ENCODE measurements at regions of chr2 and their contacts with region 1.

Region 1: GRCh38 chr2:9799665-9800632 is 43.3 kb upstream of the TAF1B start:
- ATAC-seq: peak; percentile 60 to 95 (median 87)
- H3K4me3 ChIP-seq: no peak overlapping the region
- H3K27ac ChIP-seq: no peak overlapping the region
- H3K4me1 ChIP-seq: peaks cover 13 to 16% of the 10 kb centered on the region in 2 donors

Region 2: DNA sequence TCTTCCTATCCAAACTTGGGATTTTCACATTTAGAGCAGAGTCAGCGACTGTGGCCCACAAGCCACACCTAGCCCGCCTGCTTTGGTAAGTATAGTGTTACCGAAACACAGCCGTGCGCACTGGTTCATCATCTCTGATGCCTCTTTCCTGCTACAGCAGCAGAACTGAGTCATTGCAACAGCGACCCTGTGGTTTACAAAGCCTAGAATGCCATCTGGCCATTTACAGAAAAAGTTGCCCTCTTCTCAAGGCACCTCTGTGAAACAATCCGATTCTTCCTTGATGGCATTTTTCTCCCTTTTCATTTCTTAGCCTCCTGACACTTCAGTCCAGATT is 336.3 kb before region 1 on chr2:
- in situ Hi-C with region 1: no loop called
- ATAC-seq: no peak
- H3K4me3 ChIP-seq: no peak overlapping the region
- H3K27ac ChIP-seq: no peak overlapping the region
- H3K4me1 ChIP-seq: peaks cover 2 to 7% of the 10 kb centered on the region in 2 donors

Region 3: DNA sequence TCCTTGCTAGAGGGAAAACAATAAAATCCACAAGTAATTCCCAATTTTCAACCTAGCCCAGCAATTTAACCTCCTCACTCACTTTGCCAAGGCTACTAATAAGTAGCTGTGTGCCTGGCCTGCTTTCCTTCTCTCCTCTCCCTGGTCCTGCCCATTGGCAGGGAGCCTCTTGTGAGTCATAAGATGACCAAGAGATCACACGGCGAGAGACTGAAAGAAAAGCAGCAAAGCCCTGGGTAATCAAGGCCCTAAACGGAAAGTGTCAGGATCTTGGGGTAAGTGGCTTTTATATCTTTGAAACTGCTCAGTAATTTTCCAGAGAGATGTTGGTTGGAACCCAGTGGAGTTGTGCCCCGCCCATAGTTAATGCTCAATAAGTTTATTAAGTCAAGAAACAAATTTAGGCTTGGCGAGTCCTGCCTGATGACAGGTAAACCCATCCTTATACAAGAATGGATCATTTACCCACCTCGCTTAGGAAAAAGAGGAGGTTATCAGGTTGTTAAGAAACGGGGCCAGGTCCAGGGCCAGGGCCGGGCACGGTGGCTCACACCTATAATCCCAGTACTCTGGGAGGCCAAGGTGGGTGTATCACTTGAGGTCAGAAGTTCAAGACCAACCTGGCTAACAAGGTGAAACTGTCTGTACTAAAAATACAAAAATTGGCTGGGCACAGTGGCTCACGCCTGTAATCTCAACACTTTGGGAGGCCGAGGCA is 234.4 kb before region 1 on chr2:
- in situ Hi-C with region 1: no loop called
- ATAC-seq: peak; percentile 42 to 100 (median 82)
- H3K4me3 ChIP-seq: no peak overlapping the region
- H3K27ac ChIP-seq: no peak overlapping the region
- H3K4me1 ChIP-seq: peaks cover under 1 to 7% of the 10 kb centered on the region in 2 donors

Region 4: GRCh38 chr2:9961013-9961412 is 161.1 kb after region 1 on chr2:
- in situ Hi-C with region 1: no loop called
- ATAC-seq: peak in 5 of 8 experiments; percentile 58 to 98 (median 75)
- H3K4me3 ChIP-seq: no peak overlapping the region
- H3K27ac ChIP-seq: no peak overlapping the region
- H3K4me1 ChIP-seq: peaks cover 8 to 9% of the 10 kb centered on the region in 2 donors

Region 5: GRCh38 chr2:10043906-10044601 is 244.1 kb after region 1 on chr2:
- in situ Hi-C with region 1: loop called in 3 of 9 experiments (anchors 25 kb)
- ATAC-seq: peak; percentile 68 to 81 (median 70)
- H3K4me3 ChIP-seq: peak overlapping the region; percentile 49 to 88 (median 72)
- H3K27ac ChIP-seq: peak overlapping the region; percentile 96 to 98
- H3K4me1 ChIP-seq: peaks cover 18 to 29% of the 10 kb centered on the region in 2 donors

Region 6: GRCh38 chr2:10072656-10073480 is 272.9 kb after region 1 on chr2:
- in situ Hi-C with region 1: loop called in 2 of 9 experiments (anchors 25 kb)
- ATAC-seq: peak; percentile 97 to 99 (median 98)
- H3K4me3 ChIP-seq: no peak overlapping the region
- H3K27ac ChIP-seq: no peak overlapping the region
- H3K4me1 ChIP-seq: no peaks in the 10 kb centered on the region

Region 7: GRCh38 chr2:10448208-10448645 is 648.3 kb after region 1 on chr2 and contains the start of gene ODC1:
- in situ Hi-C with region 1: loop called in 1 of 9 experiments (anchors 25 kb)
- ATAC-seq: peak; percentile 80 to 92 (median 90)
- H3K4me3 ChIP-seq: peak within 1 kb of the TSS; percentile 78 to 99 (median 93)
- H3K27ac ChIP-seq: peak within 1 kb of the TSS; percentile 97 to 98
- H3K4me1 ChIP-seq: peaks cover 14 to 20% of the 10 kb centered on the region in 2 donors
- total RNA-seq, gene ODC1: 44.7 to 401 (median 283) TPM

Measured in motor neuron (in vitro differentiated cells).